ENCODE measurements at regions of chr5 and their contacts with region 1.

Region 1: GRCh38 chr5:41649659-41650058 is 139.3 kb upstream of the PLCXD3 start:
- DNase-seq: no peak
- ATAC-seq: no peak
- H3K4me3 ChIP-seq: no peak overlapping the region
- H3K27ac ChIP-seq: peak overlapping the region in 3 of 4 donors; percentile 18 to 72 (median 40)
- H3K4me1 ChIP-seq: peaks cover 5 to 16% of the 10 kb centered on the region in 2 donors
- H3K27me3 ChIP-seq: no peaks in the 10 kb centered on the region
- CTCF ChIP-seq: no peak
- POLR2A ChIP-seq: no peak

Region 2: GRCh38 chr5:41763081-41763480 is 113.4 kb after region 1 on chr5:
- in situ Hi-C with region 1: no loop called
- intact Hi-C with region 1: no loop called
- DNase-seq: no peak
- ATAC-seq: no peak
- H3K4me3 ChIP-seq: no peak overlapping the region
- H3K27ac ChIP-seq: peak overlapping the region in 1 of 4 donors; percentile 5
- H3K4me1 ChIP-seq: peaks cover 6 to 10% of the 10 kb centered on the region in 2 donors
- H3K27me3 ChIP-seq: no peaks in the 10 kb centered on the region
- CTCF ChIP-seq: no peak
- POLR2A ChIP-seq: no peak

Region 3: DNA sequence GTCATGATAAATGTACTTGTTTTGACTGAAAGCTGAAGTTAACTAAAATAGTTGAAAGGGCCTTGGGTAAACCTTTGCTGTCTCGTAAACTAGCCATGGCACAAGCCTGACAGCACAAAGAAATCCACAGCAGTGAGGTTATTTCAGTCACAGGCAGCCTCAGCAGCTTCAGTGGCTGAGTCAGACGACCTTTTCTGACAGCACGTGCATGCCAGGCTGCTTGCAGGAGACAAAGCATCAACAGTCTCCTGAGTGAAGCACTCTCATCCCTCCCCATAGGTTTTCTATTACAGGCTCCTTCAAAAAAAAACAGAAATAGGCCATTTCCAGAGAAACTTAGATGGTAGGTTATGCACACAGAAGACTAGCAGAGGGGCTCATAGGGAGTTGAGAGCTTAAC is 186.0 kb after region 1 on chr5:
- in situ Hi-C with region 1: no loop called
- intact Hi-C with region 1: loop called (anchors 2 kb)
- DNase-seq: peak; percentile 72 to 81
- ATAC-seq: peak; percentile 99 to 100
- H3K4me3 ChIP-seq: no peak overlapping the region
- H3K27ac ChIP-seq: peak overlapping the region; percentile 70 to 86 (median 74)
- H3K4me1 ChIP-seq: peaks cover 11 to 13% of the 10 kb centered on the region in 2 donors
- H3K27me3 ChIP-seq: no peaks in the 10 kb centered on the region
- CTCF ChIP-seq: no peak
- POLR2A ChIP-seq: peak in 1 of 2 donors; percentile 22

Region 4: DNA sequence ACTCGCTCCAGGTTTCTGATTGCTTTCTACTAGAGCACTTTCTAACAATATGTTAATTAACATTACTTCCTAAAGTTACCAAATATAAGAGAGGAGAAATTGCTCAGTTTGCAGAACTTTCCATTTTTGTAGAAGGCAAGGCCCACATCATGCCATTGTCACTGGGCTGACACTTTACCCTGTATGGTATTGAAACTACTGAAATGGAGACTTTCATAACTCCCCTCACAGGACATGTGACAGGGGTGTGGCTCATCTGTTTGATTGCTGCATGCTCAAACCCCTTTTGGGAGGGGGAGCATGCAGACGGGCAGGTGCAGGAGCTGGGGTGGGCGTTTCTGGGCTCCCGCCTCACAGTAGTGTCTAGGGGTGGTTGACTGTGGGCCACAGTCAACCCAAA is 567.2 kb after region 1 on chr5:
- in situ Hi-C with region 1: no loop called
- intact Hi-C with region 1: no loop called
- DNase-seq: no peak
- ATAC-seq: no peak
- H3K4me3 ChIP-seq: no peak overlapping the region
- H3K27ac ChIP-seq: no peak overlapping the region
- H3K4me1 ChIP-seq: no peaks in the 10 kb centered on the region
- H3K27me3 ChIP-seq: no peaks in the 10 kb centered on the region
- CTCF ChIP-seq: no peak
- POLR2A ChIP-seq: no peak

Measured in gastrocnemius medialis (tissue), 4 donors.